Colonic mucosa (tissue), 4 donors: ENCODE measurements at regions of chr15 and their contacts with region 1.

Region 1: GRCh38 chr15:90497912-90498311 is 31.8 kb upstream of the CRTC3 start:
- DNase-seq: peak; percentile 82
- H3K4me3 ChIP-seq: no peak overlapping the region
- H3K27ac ChIP-seq: no peak overlapping the region
- H3K4me1 ChIP-seq: no peaks in the 10 kb centered on the region
- H3K27me3 ChIP-seq: no peaks in the 10 kb centered on the region
- CTCF ChIP-seq: no peak

Region 2: GRCh38 chr15:90336705-90337141 is 161.2 kb before region 1 on chr15:
- intact Hi-C with region 1: no loop called
- DNase-seq: no peak
- H3K4me3 ChIP-seq: no peak overlapping the region
- H3K27ac ChIP-seq: peak overlapping the region; percentile 5
- H3K4me1 ChIP-seq: no peaks in the 10 kb centered on the region
- H3K27me3 ChIP-seq: no peaks in the 10 kb centered on the region
- CTCF ChIP-seq: no peak

Region 3: DNA sequence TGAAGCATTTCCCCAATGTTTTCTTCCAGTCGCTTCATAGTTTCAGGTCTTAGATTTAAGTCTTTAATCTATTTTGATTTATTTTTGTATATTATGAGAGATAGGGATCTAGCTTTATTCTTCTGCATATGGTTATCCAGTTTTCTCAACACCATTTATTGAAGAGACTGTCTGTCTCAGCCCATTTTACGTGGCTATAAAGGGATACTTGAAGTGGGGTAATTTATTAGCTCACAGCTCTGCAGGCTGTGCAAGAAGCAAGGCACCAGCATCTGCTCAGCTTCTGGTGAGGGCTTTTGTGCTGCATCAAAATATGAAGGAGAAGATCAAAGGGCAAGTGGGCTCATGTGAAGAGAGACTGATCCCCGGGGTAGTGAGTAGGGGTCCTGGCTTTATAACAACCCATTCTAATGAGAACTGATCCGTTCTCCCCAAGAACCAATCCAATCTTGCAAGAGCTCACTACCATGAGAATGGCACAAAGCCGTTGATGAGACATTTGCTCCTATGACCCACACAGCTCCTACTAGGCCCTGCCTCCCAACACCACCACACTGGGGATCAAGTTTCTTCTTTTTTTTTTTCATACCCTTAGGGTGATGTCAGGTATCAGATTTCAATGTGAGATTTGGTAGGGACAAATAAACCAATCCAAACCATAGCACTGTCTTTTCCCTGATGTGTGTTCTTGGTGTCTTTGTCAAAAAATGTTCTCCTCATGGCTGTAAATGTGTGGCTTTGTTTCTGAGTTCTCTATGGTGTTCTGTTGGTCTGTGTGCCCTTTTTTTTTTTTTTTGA is 46.7 kb before region 1 on chr15:
- intact Hi-C with region 1: loop called (anchors 2 kb)
- DNase-seq: no peak
- H3K4me3 ChIP-seq: no peak overlapping the region
- H3K27ac ChIP-seq: no peak overlapping the region
- H3K4me1 ChIP-seq: no peaks in the 10 kb centered on the region
- H3K27me3 ChIP-seq: no peaks in the 10 kb centered on the region
- CTCF ChIP-seq: no peak

Region 4: GRCh38 chr15:90571063-90571541 is 73.2 kb after region 1 on chr15:
- intact Hi-C with region 1: no loop called
- DNase-seq: peak; percentile 85
- H3K4me3 ChIP-seq: no peak overlapping the region
- H3K27ac ChIP-seq: peak overlapping the region; percentile 21
- H3K4me1 ChIP-seq: no peaks in the 10 kb centered on the region
- H3K27me3 ChIP-seq: no peaks in the 10 kb centered on the region
- CTCF ChIP-seq: no peak